H1 (cell line): ENCODE measurements at regions of chr11 and their contacts with region 1.

Region 1: GRCh38 chr11:117843666-117844484 is 19.3 kb upstream of the FXYD2 start:
- DNase-seq: peak in 1 of 2 experiments; percentile 95
- H3K4me3 ChIP-seq: no peak overlapping the region
- H3K27ac ChIP-seq: no peak overlapping the region
- H3K4me1 ChIP-seq: no peaks in the 10 kb centered on the region
- H3K27me3 ChIP-seq: no peaks in the 10 kb centered on the region
- CTCF ChIP-seq: peak; percentile 92 to 94 (median 92)
- EP300 ChIP-seq: no peak
- POLR2A ChIP-seq: no peak
- RAD21 ChIP-seq: peak; percentile 91 to 94

Region 2: DNA sequence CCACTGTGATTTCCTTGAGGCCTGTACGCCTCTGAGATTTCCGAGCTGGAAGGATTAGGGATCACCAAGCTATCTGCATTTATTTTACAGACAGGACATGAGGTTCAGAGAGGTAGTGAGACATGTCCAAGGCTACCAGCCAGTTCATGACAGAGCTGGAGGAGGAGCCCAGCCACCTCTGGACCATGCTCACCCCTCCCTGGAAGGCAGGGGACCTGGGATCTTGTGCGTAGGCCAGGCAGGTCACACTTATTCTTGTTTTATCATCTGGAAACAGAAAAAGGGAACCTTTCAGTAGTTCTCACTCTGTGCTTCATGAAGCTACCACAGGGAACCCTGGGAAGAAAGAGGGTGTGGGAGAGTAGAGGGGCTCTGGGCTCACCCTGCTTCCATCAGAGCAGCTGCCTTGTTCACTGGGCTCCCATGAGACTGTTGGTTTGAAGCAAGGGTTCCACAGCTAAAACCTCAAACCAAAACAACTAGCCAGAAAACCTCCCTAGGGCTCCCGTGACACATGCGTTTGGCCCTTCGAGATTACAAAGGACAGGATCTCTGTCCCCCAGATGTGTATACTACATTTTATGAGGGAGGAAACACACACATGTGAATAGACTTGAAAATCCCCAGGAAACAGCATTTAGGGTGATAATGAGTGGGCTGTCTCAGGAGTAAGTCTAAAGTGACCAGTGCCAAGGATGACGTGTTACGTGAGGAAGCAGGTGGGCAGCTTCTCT is 153.2 kb before region 1 on chr11:
- CTCF ChIA-PET with region 1: no interaction called
- POLR2A ChIA-PET with region 1: no interaction called
- DNase-seq: no peak
- H3K4me3 ChIP-seq: no peak overlapping the region
- H3K27ac ChIP-seq: no peak overlapping the region
- H3K4me1 ChIP-seq: peaks cover 0 to 16% (median 7%) of the 10 kb centered on the region in 4 experiments; a peak in 6 of 7 replicates
- H3K27me3 ChIP-seq: 0 out of 7 replicates have a peak, but pooled peaks cover 0 to 3% (median 0%) of the 10 kb centered on the region in 4 experiments
- CTCF ChIP-seq: no peak
- EP300 ChIP-seq: no peak
- POLR2A ChIP-seq: no peak
- RAD21 ChIP-seq: no peak

Region 3: GRCh38 chr11:117817368-117818040 is 26.4 kb before region 1 on chr11:
- CTCF ChIA-PET with region 1: interaction called, 21 read pairs
- POLR2A ChIA-PET with region 1: no interaction called
- DNase-seq: peak; percentile 70 to 97
- H3K4me3 ChIP-seq: peak overlapping the region in 3 of 4 experiments; percentile 10 to 46 (median 29); a peak in 4 of 8 replicates
- H3K27ac ChIP-seq: no peak overlapping the region
- H3K4me1 ChIP-seq: peaks cover 0 to 31% (median 20%) of the 10 kb centered on the region in 4 experiments; a peak in 6 of 7 replicates
- H3K27me3 ChIP-seq: no peaks in the 10 kb centered on the region; a peak in 1 of 7 replicates
- CTCF ChIP-seq: peak in 2 of 3 experiments; percentile 87 to 96; a peak in 3 of 4 replicates
- EP300 ChIP-seq: no peak
- POLR2A ChIP-seq: no peak
- RAD21 ChIP-seq: peak; percentile 85 to 88

Region 4: GRCh38 chr11:117861151-117862018 is 17.5 kb after region 1 on chr11:
- CTCF ChIA-PET with region 1: interaction called, 24 read pairs
- POLR2A ChIA-PET with region 1: no interaction called
- DNase-seq: peak; percentile 72 to 75
- H3K4me3 ChIP-seq: 0 out of 8 replicates have a peak overlapping the region, but pooled peaks of 1 of the 4 experiments have one; percentile 1
- H3K27ac ChIP-seq: no peak overlapping the region
- H3K4me1 ChIP-seq: peaks cover 6 to 17% (median 13%) of the 10 kb centered on the region in 4 experiments
- H3K27me3 ChIP-seq: no peaks in the 10 kb centered on the region
- CTCF ChIP-seq: no peak
- EP300 ChIP-seq: no peak
- POLR2A ChIP-seq: no peak
- RAD21 ChIP-seq: no peak; a peak in 1 of 4 replicates

Region 5: DNA sequence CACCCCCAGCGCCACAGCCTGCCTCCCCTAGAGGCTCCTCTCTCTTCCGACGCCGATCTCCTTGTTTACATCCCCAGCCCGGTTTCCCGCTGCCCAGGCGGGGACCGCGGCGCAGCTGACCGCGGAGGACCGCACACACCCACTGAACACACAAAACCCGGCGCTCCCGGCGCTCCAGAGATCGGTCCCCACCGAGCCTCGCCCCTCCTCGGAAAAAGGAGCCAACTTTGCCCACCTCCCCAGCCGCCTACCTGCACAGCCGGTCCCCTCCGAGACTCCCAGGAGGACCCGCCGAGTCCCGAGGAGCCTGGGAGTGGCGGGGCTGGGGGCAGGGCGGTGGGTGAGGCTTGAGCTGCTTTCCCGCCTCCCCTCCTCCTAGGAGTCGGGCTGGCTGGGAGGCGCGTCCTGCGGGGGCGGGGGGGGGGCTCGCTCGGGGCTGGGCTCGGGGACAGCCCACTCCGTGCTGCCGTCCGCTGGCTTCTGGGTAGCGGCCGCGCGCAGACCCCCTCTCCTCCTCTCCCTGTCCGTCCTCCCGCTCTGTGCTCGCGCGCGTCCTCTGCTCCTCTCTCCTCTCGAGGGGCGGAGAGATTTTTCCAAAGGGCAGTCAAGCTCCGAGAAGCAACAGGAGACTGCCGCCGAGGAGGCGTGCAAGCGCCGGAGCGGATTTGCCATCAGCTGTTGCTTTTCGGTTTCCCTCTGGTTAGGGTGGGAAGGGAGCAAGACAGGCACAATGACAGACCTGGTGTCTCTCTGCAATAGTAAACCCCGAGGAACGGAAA is 32.7 kb after region 1 on chr11 and contains the start of gene FXYD6:
- CTCF ChIA-PET with region 1: interaction called, 22 read pairs
- POLR2A ChIA-PET with region 1: no interaction called
- DNase-seq: peak in 1 of 2 experiments; percentile 78
- H3K4me3 ChIP-seq: peak within 1 kb of the TSS; percentile 86 to 96 (median 87)
- H3K27ac ChIP-seq: no peak within 1 kb of the TSS
- H3K4me1 ChIP-seq: peaks cover 9 to 27% (median 21%) of the 10 kb centered on the region in 4 experiments
- H3K27me3 ChIP-seq: peaks cover 0 to 17% (median 15%) of the 10 kb centered on the region in 4 experiments; a peak in 4 of 7 replicates
- CTCF ChIP-seq: no peak
- EP300 ChIP-seq: no peak
- POLR2A ChIP-seq: no peak
- RAD21 ChIP-seq: no peak
- total RNA-seq, gene FXYD6: 44.6 and 50.0 TPM in 2 replicates

Region 6: GRCh38 chr11:117900121-117900648 is 56.3 kb after region 1 on chr11:
- CTCF ChIA-PET with region 1: interaction called, 122 read pairs
- POLR2A ChIA-PET with region 1: no interaction called
- DNase-seq: no peak
- H3K4me3 ChIP-seq: no peak overlapping the region
- H3K27ac ChIP-seq: no peak overlapping the region
- H3K4me1 ChIP-seq: no peaks in the 10 kb centered on the region; a peak in 1 of 7 replicates
- H3K27me3 ChIP-seq: peaks cover 0 to 2% (median 0%) of the 10 kb centered on the region in 4 experiments; a peak in 1 of 7 replicates
- CTCF ChIP-seq: no peak
- EP300 ChIP-seq: no peak
- POLR2A ChIP-seq: no peak
- RAD21 ChIP-seq: no peak

Region 7: DNA sequence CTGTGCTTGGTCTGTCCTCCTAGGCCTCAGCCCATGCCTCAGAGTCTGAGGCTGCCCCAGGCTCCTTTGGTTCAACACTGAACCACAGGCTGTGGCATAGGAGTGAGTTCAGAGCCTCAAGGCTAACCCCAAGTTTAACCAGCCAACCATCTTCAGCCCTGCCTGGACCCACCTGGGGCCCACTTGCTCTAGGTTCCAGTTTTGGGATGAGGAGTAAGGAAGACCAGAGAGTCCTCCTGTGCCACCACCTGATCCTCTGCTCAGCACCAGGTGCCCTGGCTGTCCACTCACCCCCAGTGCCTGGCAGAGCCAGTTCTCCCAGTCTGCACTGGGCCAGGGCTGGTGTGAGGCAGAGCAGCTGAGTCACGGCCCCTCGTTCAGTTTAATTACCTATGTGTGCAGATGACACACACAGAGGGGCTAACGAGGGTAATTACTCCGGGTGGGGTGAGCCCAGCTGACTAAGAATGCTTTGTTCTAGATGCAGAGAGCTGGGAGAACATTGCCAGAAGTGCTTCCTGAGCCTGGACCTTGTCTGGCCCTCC is 97.4 kb after region 1 on chr11:
- CTCF ChIA-PET with region 1: interaction called, 142 read pairs
- POLR2A ChIA-PET with region 1: no interaction called
- DNase-seq: no peak
- H3K4me3 ChIP-seq: no peak overlapping the region
- H3K27ac ChIP-seq: no peak overlapping the region
- H3K4me1 ChIP-seq: no peaks in the 10 kb centered on the region
- H3K27me3 ChIP-seq: no peaks in the 10 kb centered on the region; a peak in 1 of 7 replicates
- CTCF ChIP-seq: no peak
- EP300 ChIP-seq: no peak
- POLR2A ChIP-seq: no peak
- RAD21 ChIP-seq: no peak